ENCODE measurements at regions of chr4 and their contacts with region 1.

Region 1: GRCh38 chr4:186587416-186588018 is 32.1 kb upstream of the MTNR1A start:
- DNase-seq: peak; percentile 68
- H3K4me3 ChIP-seq: no peak overlapping the region
- H3K27ac ChIP-seq: no peak overlapping the region
- H3K4me1 ChIP-seq: no peaks in the 10 kb centered on the region
- H3K27me3 ChIP-seq: no peaks in the 10 kb centered on the region
- CTCF ChIP-seq: peak; percentile 68 to 95 (median 70)
- POLR2A ChIP-seq: no peak

Region 2: DNA sequence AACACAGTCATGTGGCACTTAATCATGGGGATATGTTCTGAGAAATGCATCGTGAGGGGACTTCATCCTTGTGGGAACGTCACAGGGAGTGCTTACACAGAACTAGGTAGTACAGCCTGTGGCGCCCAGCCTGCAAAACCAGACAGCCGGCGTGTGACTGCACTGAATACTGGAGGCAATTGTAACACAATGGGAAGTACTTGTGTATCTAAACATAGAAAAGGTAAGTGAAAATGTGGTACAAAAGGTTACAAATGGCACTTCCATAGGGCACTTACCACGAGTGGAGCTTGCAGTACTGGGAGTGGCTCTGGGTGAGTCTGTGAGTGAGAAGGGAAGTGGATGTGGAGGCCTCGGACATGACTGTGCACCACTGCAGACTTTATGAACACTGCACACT is 513.3 kb before region 1 on chr4:
- intact Hi-C with region 1: loop called (anchors 10 kb)
- DNase-seq: no peak
- H3K4me3 ChIP-seq: no peak overlapping the region
- H3K27ac ChIP-seq: no peak overlapping the region
- H3K4me1 ChIP-seq: no peaks in the 10 kb centered on the region
- H3K27me3 ChIP-seq: no peaks in the 10 kb centered on the region
- CTCF ChIP-seq: no peak
- POLR2A ChIP-seq: no peak

Region 3: GRCh38 chr4:186297013-186297645 is 290.4 kb before region 1 on chr4:
- intact Hi-C with region 1: loop called (anchors 2 kb)
- DNase-seq: peak; percentile 8
- H3K4me3 ChIP-seq: no peak overlapping the region
- H3K27ac ChIP-seq: no peak overlapping the region
- H3K4me1 ChIP-seq: no peaks in the 10 kb centered on the region
- H3K27me3 ChIP-seq: no peaks in the 10 kb centered on the region
- CTCF ChIP-seq: peak; percentile 30 to 72 (median 60)
- POLR2A ChIP-seq: no peak

Region 4: GRCh38 chr4:186472948-186473347 is 114.6 kb before region 1 on chr4:
- intact Hi-C with region 1: loop called (anchors 5 kb)
- DNase-seq: no peak
- H3K4me3 ChIP-seq: no peak overlapping the region
- H3K27ac ChIP-seq: no peak overlapping the region
- H3K4me1 ChIP-seq: no peaks in the 10 kb centered on the region
- H3K27me3 ChIP-seq: no peaks in the 10 kb centered on the region
- CTCF ChIP-seq: peak in 3 of 4 experiments; percentile 56 to 64 (median 59)
- POLR2A ChIP-seq: no peak